PC-3 (cell line): ENCODE measurements at regions of chr19 and their contacts with region 1.

Region 1: GRCh38 chr19:55339048-55339888 is at the start of gene KMT5C:
- DNase-seq: peak; percentile 100
- ATAC-seq: peak; percentile 86
- H3K4me3 ChIP-seq: peak within 1 kb of the TSS; percentile 80
- H3K27ac ChIP-seq: peak within 1 kb of the TSS; percentile 95
- H3K4me1 ChIP-seq: peaks cover 19% of the 10 kb centered on the region
- H3K27me3 ChIP-seq: no peaks in the 10 kb centered on the region
- CTCF ChIP-seq: peak; percentile 27; the same call in 1 of the 2 replicates
- total RNA-seq, gene KMT5C: 21.9 and 36.6 TPM in 2 replicates

Region 2: DNA sequence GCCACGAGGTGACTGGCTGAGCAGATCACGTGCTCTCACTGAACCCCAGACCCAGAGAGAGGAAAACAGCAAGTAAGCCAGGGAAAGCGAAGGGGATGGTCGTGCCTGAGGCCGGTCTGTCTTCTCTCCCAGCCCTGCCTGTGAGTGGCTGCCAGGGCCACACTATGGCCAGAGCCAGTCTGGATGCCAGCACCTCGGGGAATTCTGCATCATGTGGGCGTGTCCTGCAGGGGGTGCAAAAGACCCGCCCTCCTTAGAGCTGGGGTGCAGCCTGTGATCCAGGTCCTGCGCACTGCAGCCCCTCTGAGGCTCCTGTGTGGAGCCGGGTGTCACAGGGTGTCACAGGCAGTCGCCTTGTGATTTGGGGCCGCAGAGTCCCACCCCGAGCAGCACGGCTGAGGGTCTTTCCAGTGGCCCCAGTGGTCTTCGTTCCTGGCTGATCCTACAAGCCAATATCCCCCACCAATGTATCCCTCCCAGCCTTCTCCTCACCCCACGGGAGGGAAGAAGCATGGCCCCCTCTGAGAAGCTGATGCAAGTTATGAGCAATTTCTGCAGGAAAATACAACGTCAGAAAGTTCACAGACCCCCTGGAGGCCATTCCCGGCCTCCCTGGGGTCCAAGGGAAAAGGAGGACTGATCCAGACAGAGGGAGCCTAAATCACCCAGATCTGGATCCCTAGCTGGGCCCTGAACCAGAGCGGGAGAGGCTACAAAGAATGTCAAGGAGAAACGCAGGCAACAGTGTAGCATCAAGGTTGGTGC is 229.6 kb before region 1 on chr19:
- CTCF ChIA-PET with region 1: no interaction called
- POLR2A ChIA-PET with region 1: no interaction called
- intact Hi-C with region 1: no loop called
- DNase-seq: no peak
- ATAC-seq: no peak
- H3K4me3 ChIP-seq: no peak overlapping the region
- H3K27ac ChIP-seq: no peak overlapping the region
- H3K4me1 ChIP-seq: no peaks in the 10 kb centered on the region
- H3K27me3 ChIP-seq: no peaks in the 10 kb centered on the region
- CTCF ChIP-seq: no peak

Region 3: DNA sequence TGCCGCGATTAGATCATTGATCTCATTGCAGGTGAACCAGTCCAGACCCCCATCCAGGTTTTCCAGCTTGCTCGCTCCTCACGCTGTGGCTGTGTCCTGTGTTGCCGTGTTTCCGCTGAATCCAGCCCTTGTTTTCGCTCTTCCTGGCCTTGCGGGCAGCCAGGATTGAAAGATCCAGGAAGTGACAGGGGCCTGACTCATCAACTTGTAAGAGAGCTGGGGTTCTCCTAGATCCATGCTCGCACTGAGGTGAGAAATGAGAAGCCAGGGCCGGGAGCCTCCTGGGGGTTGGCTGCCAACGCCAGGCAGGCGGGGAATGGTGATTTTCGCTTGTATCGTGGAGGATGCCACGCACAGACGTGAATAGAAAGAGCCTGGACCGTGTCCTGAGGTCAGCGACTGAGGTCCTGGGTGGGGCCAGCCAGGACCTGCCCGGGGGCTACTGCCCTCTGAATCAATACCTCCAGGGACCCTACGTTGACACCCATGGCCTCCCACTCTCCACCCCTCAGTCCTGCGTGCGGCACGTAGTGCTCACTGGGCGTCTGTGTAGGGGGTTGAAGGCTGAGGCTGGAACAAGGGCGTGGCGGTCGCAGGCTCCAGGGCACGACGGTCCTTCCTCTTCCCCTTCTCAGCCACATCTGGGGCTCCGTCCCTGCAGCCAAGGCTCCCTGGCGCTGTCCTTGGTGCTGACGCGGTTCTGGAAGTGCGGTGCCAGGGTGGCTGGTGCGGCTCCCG is 122.6 kb before region 1 on chr19:
- CTCF ChIA-PET with region 1: no interaction called
- POLR2A ChIA-PET with region 1: no interaction called
- intact Hi-C with region 1: loop called (anchors 5 kb)
- DNase-seq: peak; percentile 100
- ATAC-seq: peak; percentile 91
- H3K4me3 ChIP-seq: peak overlapping the region; percentile 44
- H3K27ac ChIP-seq: peak overlapping the region; percentile 84
- H3K4me1 ChIP-seq: peaks cover 22% of the 10 kb centered on the region
- H3K27me3 ChIP-seq: no peaks in the 10 kb centered on the region
- CTCF ChIP-seq: no peak

Region 4: GRCh38 chr19:55301459-55302317 is 37.6 kb before region 1 on chr19:
- CTCF ChIA-PET with region 1: interaction called, 5 read pairs
- POLR2A ChIA-PET with region 1: no interaction called
- intact Hi-C with region 1: loop called (anchors 1 kb)
- DNase-seq: peak; percentile 91
- ATAC-seq: peak; percentile 87
- H3K4me3 ChIP-seq: peak overlapping the region; percentile 57
- H3K27ac ChIP-seq: no peak overlapping the region
- H3K4me1 ChIP-seq: peaks cover 7% of the 10 kb centered on the region; the same call in 1 of the 2 replicates
- H3K27me3 ChIP-seq: no peaks in the 10 kb centered on the region
- CTCF ChIP-seq: peak; percentile 97

Region 5: DNA sequence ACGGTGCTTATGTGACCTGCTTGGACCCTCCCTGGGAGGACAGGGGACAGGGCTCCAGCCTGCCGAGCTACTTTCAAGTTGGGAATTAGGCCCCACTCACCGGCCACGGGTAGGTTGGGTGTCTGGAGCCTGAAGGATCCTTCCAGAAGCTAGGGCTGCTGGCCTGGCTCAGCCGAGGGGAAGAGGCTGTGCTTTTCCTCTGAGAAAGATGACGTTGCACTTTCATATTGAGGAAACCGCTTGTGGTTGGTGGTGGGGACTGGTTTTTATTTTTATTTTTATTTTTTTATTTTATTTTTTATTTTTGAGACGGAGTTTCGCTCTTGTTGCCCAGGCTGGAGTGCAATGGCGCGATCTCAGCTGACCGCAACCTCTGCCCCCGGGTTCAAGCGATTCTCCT is 14.1 kb before region 1 on chr19 and contains the start of gene TMEM150B:
- CTCF ChIA-PET with region 1: interaction called, 12 read pairs
- POLR2A ChIA-PET with region 1: interaction called, 8 read pairs
- intact Hi-C with region 1: no loop called
- DNase-seq: no peak
- ATAC-seq: no peak
- H3K4me3 ChIP-seq: no peak within 1 kb of the TSS
- H3K27ac ChIP-seq: no peak within 1 kb of the TSS
- H3K4me1 ChIP-seq: peaks cover 9% of the 10 kb centered on the region
- H3K27me3 ChIP-seq: no peaks in the 10 kb centered on the region
- CTCF ChIP-seq: no peak
- total RNA-seq, gene TMEM150B: not detected in 2 replicates

Region 6: GRCh38 chr19:55353803-55354697 is 14.8 kb after region 1 on chr19:
- CTCF ChIA-PET with region 1: no interaction called
- POLR2A ChIA-PET with region 1: interaction called, 4 read pairs
- intact Hi-C with region 1: loop called (anchors 2 kb)
- DNase-seq: peak; percentile 65
- ATAC-seq: peak; percentile 81
- H3K4me3 ChIP-seq: peak overlapping the region; percentile 68
- H3K27ac ChIP-seq: no peak overlapping the region
- H3K4me1 ChIP-seq: peaks cover 45% of the 10 kb centered on the region
- H3K27me3 ChIP-seq: peaks cover 17% of the 10 kb centered on the region
- CTCF ChIP-seq: no peak

Region 7: DNA sequence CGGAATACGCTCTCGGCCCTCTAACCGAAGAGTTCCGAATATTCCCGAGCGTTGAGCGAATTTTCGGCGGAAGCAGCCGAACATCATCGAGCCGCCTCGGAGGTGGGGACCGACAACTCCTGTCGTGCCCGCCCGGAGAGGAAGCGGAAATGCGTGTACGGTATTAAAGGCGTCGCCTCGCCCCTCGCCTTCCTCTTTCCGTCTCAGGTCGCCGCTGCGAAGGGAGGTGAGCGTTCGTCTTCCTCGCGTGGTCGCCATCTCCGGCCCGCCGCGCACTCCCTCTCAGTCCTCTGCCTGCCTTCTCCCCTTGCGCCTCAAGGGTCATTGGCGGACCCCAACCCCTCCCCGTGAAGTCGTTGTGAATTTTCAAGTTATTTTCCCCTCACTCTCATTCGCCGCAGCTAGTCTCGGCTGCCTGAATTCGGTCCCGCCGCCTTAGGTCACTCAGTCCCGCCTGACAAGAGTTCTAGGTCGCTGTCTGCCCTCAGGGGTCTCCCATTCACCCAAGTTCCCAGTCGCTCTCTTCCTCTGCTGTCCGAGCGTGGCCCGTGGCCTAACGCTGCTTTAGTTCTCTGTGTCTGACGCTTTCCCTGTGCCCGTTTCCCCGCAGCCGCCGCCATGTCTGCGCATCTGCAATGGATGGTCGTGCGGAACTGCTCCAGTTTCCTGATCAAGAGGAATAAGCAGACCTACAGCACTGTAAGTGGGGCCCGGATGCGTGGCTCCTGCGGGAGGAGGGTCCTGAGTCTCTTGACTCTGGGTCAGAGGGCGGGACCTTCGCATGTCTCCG is 46.7 kb after region 1 on chr19 and contains the start of gene RPL28:
- CTCF ChIA-PET with region 1: interaction called, 9 read pairs
- POLR2A ChIA-PET with region 1: interaction called, 8 read pairs
- intact Hi-C with region 1: loop called (anchors 2 kb)
- DNase-seq: peak; percentile 100
- ATAC-seq: peak; percentile 71
- H3K4me3 ChIP-seq: peak within 1 kb of the TSS; percentile 98
- H3K27ac ChIP-seq: peak within 1 kb of the TSS; percentile 54
- H3K4me1 ChIP-seq: peaks cover 41% of the 10 kb centered on the region
- H3K27me3 ChIP-seq: no peaks in the 10 kb centered on the region
- CTCF ChIP-seq: no peak
- total RNA-seq, gene RPL28: 550 and 836 TPM in 2 replicates